ENCODE measurements at regions of chr13 and their contacts with region 1.

Region 1: GRCh38 chr13:41332829-41333228 is 21.8 kb downstream of the NAA16 start:
- DNase-seq: no peak
- ATAC-seq: no peak
- H3K4me3 ChIP-seq: no peak overlapping the region
- H3K27ac ChIP-seq: no peak overlapping the region
- H3K4me1 ChIP-seq: no peaks in the 10 kb centered on the region
- H3K27me3 ChIP-seq: no peaks in the 10 kb centered on the region
- CTCF ChIP-seq: no peak
- POLR2A ChIP-seq: no peak
- RAD21 ChIP-seq: no peak

Region 2: DNA sequence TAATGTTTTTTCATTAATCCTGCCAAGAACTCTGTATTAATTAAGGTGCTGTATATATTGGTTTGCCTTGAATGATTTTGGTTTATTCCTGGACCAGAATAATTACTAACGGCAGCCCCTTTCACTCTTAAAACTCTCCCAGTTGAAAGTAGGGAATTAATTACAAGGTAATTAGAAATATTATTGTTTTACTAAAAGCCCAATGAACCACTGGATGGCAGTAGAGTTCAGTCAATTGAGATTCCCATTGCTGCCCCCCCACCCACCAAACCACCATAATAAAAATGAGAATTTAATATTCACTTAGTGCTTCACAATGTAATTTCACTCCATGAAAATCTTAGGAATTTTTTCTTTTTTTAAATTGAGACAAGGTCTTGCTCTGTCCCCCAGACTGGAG is 257.8 kb before region 1 on chr13:
- CTCF ChIA-PET with region 1: no interaction called
- POLR2A ChIA-PET with region 1: no interaction called
- dilution Hi-C with region 1: no loop called
- in situ Hi-C with region 1: no loop called
- intact Hi-C with region 1: loop called (anchors 5 kb)
- DNase-seq: peak; percentile 49
- ATAC-seq: peak; percentile 59
- H3K4me3 ChIP-seq: no peak overlapping the region
- H3K27ac ChIP-seq: no peak overlapping the region
- H3K4me1 ChIP-seq: no peaks in the 10 kb centered on the region
- H3K27me3 ChIP-seq: no peaks in the 10 kb centered on the region
- CTCF ChIP-seq: peak; percentile 76
- POLR2A ChIP-seq: no peak
- RAD21 ChIP-seq: peak; percentile 83

Measured in IMR-90 (cell line).